A549 (cell line): ENCODE measurements at regions of chr12 and their contacts with region 1.

Region 1: DNA sequence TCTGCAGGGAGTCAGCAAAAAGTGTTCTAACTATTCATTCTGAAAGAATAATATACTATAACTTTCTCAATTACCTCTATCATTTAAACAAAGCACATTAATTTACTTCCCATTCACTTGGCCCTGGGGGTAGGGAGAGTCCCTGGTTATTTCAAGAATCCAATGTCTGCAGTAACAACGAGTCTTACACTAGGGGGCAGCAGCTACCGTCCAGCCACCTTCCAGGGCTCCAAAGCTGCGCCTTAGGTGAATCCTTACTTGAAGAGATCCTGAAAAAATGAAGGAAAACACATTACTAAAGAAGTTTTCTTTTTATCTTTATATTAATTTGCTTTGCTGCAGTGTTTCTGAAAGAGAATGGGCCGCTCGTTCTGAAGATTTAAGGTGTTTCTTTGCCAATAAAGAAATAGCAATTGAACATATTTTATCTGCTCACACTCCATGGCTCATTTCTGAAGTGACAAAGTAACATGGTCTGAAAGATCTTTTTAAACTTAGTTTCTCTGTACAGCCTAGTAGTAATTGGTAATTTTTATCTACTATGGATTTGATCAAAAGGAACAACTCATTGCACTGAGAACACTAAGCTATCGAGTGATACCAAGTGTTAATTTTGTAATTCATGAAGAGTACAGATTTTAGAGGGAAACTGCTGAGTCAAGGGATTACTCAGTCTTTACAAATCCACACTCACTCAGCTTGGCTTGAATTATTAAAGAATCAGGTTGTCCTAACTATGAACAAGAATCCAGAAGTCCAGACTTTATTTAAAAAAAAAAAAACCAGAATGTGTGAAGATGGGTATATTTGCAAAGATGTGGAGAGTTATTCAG is 27.6 kb downstream of the BHLHE41 start:
- DNase-seq: peak; percentile 80 to 86
- ATAC-seq: peak; percentile 97 to 100
- H3K4me3 ChIP-seq: no peak overlapping the region
- H3K27ac ChIP-seq: peak overlapping the region in 1 of 2 experiments; percentile 5; a peak in 1 of 6 replicates
- H3K4me1 ChIP-seq: 0 out of 3 replicates have a peak, but pooled peaks cover 5% of the 10 kb centered on the region
- CTCF ChIP-seq: peak; percentile 97
- EP300 ChIP-seq: no peak
- POLR2A ChIP-seq: no peak
- RAD21 ChIP-seq: peak; percentile 92 to 95

Region 2: DNA sequence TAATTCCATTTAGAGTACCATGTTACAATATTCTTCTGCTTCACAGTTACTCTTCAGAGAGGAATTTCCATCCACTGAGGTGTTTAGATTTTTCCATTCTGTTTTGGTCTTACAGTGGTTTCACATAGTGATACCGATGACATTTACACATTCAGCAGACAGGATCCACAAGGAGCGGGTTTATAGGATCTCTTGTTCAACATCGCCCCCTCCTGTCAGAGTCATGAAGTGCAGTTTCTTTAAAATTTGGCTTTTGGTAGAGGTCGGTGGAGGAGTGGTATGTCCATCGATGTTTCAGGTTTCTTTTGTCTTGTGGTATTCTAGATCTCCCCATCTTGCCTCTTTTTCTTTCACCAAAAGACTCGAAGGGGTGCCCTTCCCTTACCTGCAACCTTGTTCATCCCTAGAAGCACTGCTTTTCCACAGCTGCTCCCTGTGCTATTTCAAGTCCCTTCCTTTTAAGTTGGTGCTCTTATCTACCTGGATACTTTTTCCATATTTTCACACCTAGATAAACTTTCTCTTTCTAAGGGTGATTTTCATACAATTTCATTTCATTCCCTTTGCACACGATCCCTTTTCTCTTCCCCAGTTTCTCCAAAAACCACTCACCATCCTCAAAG is 554.4 kb after region 1 on chr12:
- CTCF ChIA-PET with region 1: interaction called, 10 read pairs
- POLR2A ChIA-PET with region 1: no interaction called
- DNase-seq: peak; percentile 69 to 71
- ATAC-seq: peak; percentile 47 to 84; a peak in 4 of 6 replicates
- H3K4me3 ChIP-seq: no peak overlapping the region
- H3K27ac ChIP-seq: no peak overlapping the region
- H3K4me1 ChIP-seq: peaks cover 13% of the 10 kb centered on the region
- CTCF ChIP-seq: peak; percentile 76
- EP300 ChIP-seq: no peak
- POLR2A ChIP-seq: no peak
- RAD21 ChIP-seq: peak; percentile 86 to 94